Psoas muscle (tissue), 8 donors: ENCODE measurements at regions of chr20 and their contacts with region 1.

Region 1: DNA sequence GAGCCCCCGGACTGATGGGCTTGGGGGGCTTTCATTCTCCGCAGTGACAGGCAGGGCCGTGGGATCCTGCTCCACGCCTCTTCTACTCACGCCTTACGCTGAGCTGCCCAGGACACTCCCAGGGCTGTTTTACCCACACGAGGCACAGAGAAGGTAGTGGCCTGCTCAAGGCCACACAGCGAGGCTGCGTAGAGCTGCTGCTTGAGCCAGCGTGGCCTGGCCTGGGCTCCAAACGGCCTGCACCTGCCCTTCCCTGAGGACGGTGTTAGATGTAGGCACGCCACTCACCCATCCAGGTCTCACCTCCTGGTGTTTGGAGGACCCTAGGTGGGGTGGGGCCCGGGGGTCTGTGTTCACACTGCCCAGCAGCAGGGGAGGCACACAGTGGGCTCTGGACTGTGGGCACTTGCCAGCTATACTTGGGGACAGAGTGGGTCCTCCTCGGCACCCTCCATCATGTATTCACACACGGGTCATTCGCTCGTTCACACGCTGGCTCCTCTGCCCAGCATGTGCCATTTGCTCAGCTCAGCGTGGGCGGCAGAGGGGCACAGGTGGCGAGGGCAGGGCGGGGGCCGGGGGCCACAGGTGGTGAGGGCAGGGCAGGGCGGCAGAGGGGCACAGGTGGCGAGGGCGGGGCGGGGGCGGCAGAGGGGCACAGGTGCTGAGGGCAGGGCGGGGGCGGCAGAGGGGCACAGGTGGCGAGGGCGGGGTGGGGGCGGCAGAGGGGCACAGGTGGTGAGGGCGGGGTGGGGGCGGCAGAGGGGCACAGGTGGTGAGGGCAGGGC is 18.4 kb upstream of the RBBP8NL start:
- DNase-seq: no peak
- ATAC-seq: peak in 1 of 4 donors; percentile 6
- H3K4me3 ChIP-seq: no peak overlapping the region
- H3K27ac ChIP-seq: no peak overlapping the region
- H3K4me1 ChIP-seq: no peaks in the 10 kb centered on the region
- H3K27me3 ChIP-seq: peaks cover 0 to 63% (median 9%) of the 10 kb centered on the region in 3 donors
- CTCF ChIP-seq: no peak

Region 2: DNA sequence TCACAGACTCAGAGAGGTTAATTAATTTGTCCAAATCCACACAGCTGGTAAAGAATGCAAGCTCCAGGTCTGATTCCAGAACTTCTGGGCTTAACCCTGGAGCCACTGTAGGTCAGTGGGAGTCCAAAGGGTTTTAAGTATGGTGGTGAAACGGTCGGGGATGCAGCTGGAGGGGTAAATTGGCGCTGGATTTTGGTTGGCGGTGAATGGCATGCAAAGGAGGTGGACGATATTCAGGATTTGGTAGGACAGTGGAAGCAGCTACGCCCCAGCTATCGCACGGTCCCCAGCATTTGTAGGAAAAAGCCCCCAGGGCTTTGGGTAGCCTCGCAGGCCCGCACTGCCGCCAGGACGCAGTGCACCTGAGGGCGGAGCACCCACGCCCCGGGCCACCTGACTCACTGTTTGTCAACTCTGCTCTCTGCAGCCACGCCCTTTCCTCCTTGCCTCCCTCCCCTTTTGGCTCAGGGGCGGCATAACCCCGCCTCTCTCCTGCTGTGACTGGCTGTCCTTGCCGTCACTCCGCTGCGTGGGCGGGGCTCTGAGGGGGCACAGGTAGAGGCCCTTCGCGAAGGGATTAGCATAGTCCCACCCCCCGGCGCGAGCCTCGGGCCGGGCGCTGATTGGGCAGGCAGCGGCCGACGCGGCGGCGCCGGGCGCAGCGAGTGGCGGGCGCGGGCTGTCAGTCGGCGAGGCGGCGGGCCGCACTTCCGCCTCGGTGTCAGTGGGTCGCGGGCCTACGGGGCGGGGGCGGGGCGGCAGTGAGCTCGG is 207.8 kb before region 1 on chr20 and contains the start of gene OSBPL2:
- intact Hi-C with region 1: no loop called
- DNase-seq: peak; percentile 99 to 100
- ATAC-seq: peak; percentile 95 to 97 (median 96)
- H3K4me3 ChIP-seq: peak within 1 kb of the TSS; percentile 73
- H3K27ac ChIP-seq: peak within 1 kb of the TSS; percentile 90
- H3K4me1 ChIP-seq: peaks cover 58% of the 10 kb centered on the region
- H3K27me3 ChIP-seq: no peaks in the 10 kb centered on the region
- CTCF ChIP-seq: no peak
- total RNA-seq, gene OSBPL2: 19.8 to 30.9 (median 24.8) TPM

Region 3: GRCh38 chr20:62461157-62461556 is 15.4 kb after region 1 on chr20:
- intact Hi-C with region 1: no loop called
- DNase-seq: no peak
- ATAC-seq: peak in 3 of 4 donors; percentile 63 to 70 (median 65)
- H3K4me3 ChIP-seq: no peak overlapping the region
- H3K27ac ChIP-seq: no peak overlapping the region
- H3K4me1 ChIP-seq: no peaks in the 10 kb centered on the region
- H3K27me3 ChIP-seq: peaks cover 0 to 22% (median 0%) of the 10 kb centered on the region in 3 donors
- CTCF ChIP-seq: no peak

Region 4: GRCh38 chr20:62473717-62474603 is 28.2 kb after region 1 on chr20:
- intact Hi-C with region 1: loop called in 1 of 2 experiments (anchors 2 kb)
- DNase-seq: no peak
- ATAC-seq: no peak
- H3K4me3 ChIP-seq: no peak overlapping the region
- H3K27ac ChIP-seq: no peak overlapping the region
- H3K4me1 ChIP-seq: peaks cover 19% of the 10 kb centered on the region
- H3K27me3 ChIP-seq: peaks cover 0 to 78% (median 35%) of the 10 kb centered on the region in 3 donors
- CTCF ChIP-seq: no peak